SK-N-SH (cell line): ENCODE measurements at regions of chr7 and their contacts with region 1.

Region 1: GRCh38 chr7:138886501-138886917 is 88.5 kb upstream of the ATP6V0A4 start:
- DNase-seq: peak; percentile 68
- H3K4me3 ChIP-seq: no peak overlapping the region
- H3K27ac ChIP-seq: peak overlapping the region in 1 of 2 experiments; percentile 11; a peak in 1 of 4 replicates
- H3K4me1 ChIP-seq: peaks cover 20 to 35% of the 10 kb centered on the region in 2 experiments
- H3K27me3 ChIP-seq: no peaks in the 10 kb centered on the region
- CTCF ChIP-seq: peak; percentile 92
- EP300 ChIP-seq: no peak
- RAD21 ChIP-seq: peak; percentile 88

Region 2: GRCh38 chr7:138842111-138842510 is 44.4 kb before region 1 on chr7:
- CTCF ChIA-PET with region 1: no interaction called
- POLR2A ChIA-PET with region 1: no interaction called
- DNase-seq: no peak
- H3K4me3 ChIP-seq: no peak overlapping the region
- H3K27ac ChIP-seq: 0 out of 4 replicates have a peak overlapping the region, but pooled peaks of 1 of the 2 experiments have one; percentile 12
- H3K4me1 ChIP-seq: 0 out of 4 replicates have a peak, but pooled peaks cover 0 to 9% of the 10 kb centered on the region in 2 experiments
- H3K27me3 ChIP-seq: no peaks in the 10 kb centered on the region
- CTCF ChIP-seq: no peak
- EP300 ChIP-seq: no peak
- RAD21 ChIP-seq: no peak

Region 3: DNA sequence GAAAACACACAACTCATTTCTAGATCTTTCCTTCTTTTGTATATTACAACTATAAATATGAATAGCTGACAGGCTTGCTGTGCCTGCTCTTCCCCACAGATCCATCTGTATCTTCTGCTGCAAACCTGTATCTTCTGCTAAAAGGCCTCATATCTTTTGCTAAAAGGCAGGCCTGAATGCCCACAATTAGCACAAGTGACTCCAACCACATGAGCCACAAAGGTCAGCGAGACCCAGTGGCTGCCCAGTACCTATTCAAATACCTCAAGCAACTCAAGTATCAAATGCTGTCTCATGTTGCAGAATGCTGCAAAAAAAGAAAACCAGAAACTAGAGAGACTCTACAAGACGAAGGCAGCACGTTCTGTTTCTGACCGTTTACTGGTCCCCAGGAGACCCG is 34.0 kb before region 1 on chr7:
- CTCF ChIA-PET with region 1: interaction called, 10 read pairs
- POLR2A ChIA-PET with region 1: no interaction called
- DNase-seq: no peak
- H3K4me3 ChIP-seq: no peak overlapping the region
- H3K27ac ChIP-seq: no peak overlapping the region
- H3K4me1 ChIP-seq: peaks cover 0 to 3% of the 10 kb centered on the region in 2 experiments; a peak in 2 of 4 replicates
- H3K27me3 ChIP-seq: no peaks in the 10 kb centered on the region
- CTCF ChIP-seq: no peak
- EP300 ChIP-seq: no peak
- RAD21 ChIP-seq: no peak

Region 4: DNA sequence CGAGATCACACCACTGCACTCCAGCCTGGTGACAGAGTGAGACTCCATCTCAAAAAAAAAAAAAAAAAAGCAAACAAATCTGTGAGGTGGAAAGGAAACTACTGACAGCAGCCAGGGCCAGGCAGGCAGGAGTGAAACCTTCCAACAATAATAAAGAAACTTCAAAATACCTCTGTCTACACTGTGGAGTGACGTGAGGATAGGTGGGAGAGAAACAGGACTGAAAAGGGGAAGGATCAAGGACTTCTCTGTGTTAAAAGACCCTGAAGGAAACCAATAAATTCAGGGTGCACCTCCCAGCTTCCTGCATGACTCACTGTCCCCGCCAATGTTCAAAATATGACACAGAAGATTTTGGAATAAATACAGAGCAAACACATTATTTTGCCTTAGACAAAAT is 11.7 kb after region 1 on chr7:
- CTCF ChIA-PET with region 1: interaction called, 30 read pairs
- POLR2A ChIA-PET with region 1: no interaction called
- DNase-seq: no peak
- H3K4me3 ChIP-seq: no peak overlapping the region
- H3K27ac ChIP-seq: no peak overlapping the region
- H3K4me1 ChIP-seq: no peaks in the 10 kb centered on the region; a peak in 1 of 4 replicates
- H3K27me3 ChIP-seq: no peaks in the 10 kb centered on the region
- CTCF ChIP-seq: no peak
- EP300 ChIP-seq: no peak
- RAD21 ChIP-seq: no peak

Region 5: DNA sequence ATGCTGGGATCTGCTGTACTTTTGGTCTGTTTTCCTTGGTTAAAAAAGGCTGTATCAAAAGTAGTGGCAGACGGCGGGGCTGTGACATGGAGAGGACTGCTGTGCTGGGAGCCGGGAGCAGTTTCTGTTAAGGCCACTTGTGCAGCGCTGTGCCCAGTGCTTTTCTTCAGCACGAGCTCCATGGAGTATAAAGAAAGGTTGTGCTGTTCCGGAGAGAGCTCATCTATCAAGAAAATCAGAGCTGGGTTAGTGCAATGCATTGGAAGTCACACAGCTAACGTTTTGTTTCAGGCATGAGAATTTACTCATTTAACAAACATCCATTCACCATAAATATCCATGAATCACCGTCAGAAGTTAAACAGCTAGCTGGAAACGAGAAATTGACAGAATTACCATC is 32.7 kb after region 1 on chr7:
- CTCF ChIA-PET with region 1: interaction called, 13 read pairs
- POLR2A ChIA-PET with region 1: no interaction called
- DNase-seq: no peak
- H3K4me3 ChIP-seq: no peak overlapping the region
- H3K27ac ChIP-seq: no peak overlapping the region
- H3K4me1 ChIP-seq: peaks cover 0 to 5% of the 10 kb centered on the region in 2 experiments; a peak in 2 of 4 replicates
- H3K27me3 ChIP-seq: no peaks in the 10 kb centered on the region
- CTCF ChIP-seq: no peak
- EP300 ChIP-seq: no peak
- RAD21 ChIP-seq: no peak

Region 6: DNA sequence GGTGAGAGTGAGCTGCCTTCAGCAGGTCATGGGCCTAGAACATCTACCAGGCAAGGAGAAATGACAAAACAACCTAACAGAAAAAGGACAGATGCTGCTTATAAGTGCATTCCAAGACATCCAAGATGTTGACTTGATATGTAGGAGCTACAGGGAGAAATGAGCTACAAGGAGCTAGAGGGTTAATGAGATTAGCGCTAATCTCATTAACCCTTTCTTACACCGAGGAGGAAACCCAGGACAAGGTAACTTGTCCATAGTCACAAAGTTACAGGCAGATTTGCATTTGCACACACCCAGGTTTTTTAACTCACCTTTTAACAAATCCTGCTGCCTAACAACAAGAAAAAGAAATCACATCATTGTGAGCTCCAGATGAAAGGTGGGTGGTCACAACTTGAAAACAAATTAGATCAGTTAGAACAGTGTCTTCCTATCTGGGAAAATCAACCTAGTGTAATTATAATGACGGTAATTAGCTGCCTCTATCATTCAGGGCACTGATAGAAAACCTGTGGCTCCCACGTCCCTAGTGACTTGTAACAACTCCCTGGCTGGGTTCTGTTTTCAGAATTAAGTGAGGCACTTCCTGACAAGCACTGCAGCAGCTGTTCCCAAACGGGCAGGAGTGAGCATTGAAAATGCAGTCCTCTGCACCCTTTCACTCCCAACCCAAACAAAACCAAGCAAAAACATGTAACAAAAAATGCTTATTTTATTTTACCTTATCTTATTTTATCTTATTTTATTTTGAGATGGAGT is 89.0 kb after region 1 on chr7:
- CTCF ChIA-PET with region 1: interaction called, 65 read pairs
- POLR2A ChIA-PET with region 1: interaction called, 6 read pairs
- DNase-seq: peak; percentile 73
- H3K4me3 ChIP-seq: no peak overlapping the region
- H3K27ac ChIP-seq: no peak overlapping the region; a peak in 1 of 4 replicates
- H3K4me1 ChIP-seq: peaks cover 0 to 39% of the 10 kb centered on the region in 2 experiments; a peak in 3 of 4 replicates
- H3K27me3 ChIP-seq: no peaks in the 10 kb centered on the region
- CTCF ChIP-seq: no peak
- EP300 ChIP-seq: peak in 1 of 2 experiments; percentile 67; a peak in 2 of 4 replicates
- RAD21 ChIP-seq: peak; percentile 39

Region 7: GRCh38 chr7:138992052-138992531 is 105.6 kb after region 1 on chr7:
- CTCF ChIA-PET with region 1: interaction called, 26 read pairs
- POLR2A ChIA-PET with region 1: no interaction called
- DNase-seq: no peak
- H3K4me3 ChIP-seq: no peak overlapping the region
- H3K27ac ChIP-seq: no peak overlapping the region
- H3K4me1 ChIP-seq: no peaks in the 10 kb centered on the region
- H3K27me3 ChIP-seq: no peaks in the 10 kb centered on the region
- CTCF ChIP-seq: no peak
- EP300 ChIP-seq: no peak
- RAD21 ChIP-seq: no peak

Region 8: GRCh38 chr7:139035586-139036353 is 149.3 kb after region 1 on chr7 and contains the start of gene ZC3HAV1L:
- CTCF ChIA-PET with region 1: interaction called, 13 read pairs
- POLR2A ChIA-PET with region 1: no interaction called
- DNase-seq: peak; percentile 99
- H3K4me3 ChIP-seq: peak within 1 kb of the TSS; percentile 69 to 86
- H3K27ac ChIP-seq: peak within 1 kb of the TSS; percentile 54 to 87
- H3K4me1 ChIP-seq: peaks cover 9 to 20% of the 10 kb centered on the region in 2 experiments; a peak in 3 of 4 replicates
- H3K27me3 ChIP-seq: no peaks in the 10 kb centered on the region
- CTCF ChIP-seq: no peak
- EP300 ChIP-seq: peak in 1 of 2 experiments; percentile 5; a peak in 1 of 4 replicates
- RAD21 ChIP-seq: no peak
- polyA plus RNA-seq, gene ZC3HAV1L: 9.7 and 14.5 TPM in 2 replicates